ENCODE measurements at regions of chr12 and their contacts with region 1.

Region 1: GRCh38 chr12:57175428-57176138 is 28.2 kb upstream of the LRP1-AS start:
- DNase-seq: peak; percentile 86
- H3K4me3 ChIP-seq: no peak overlapping the region
- H3K27ac ChIP-seq: peak overlapping the region; percentile 0 to 62 (median 36)
- H3K4me1 ChIP-seq: peaks cover 0 to 7% (median 0%) of the 10 kb centered on the region in 4 donors
- H3K27me3 ChIP-seq: no peaks in the 10 kb centered on the region
- CTCF ChIP-seq: peak; percentile 72 to 88 (median 74)
- EP300 ChIP-seq: no peak
- POLR2A ChIP-seq: no peak

Region 2: GRCh38 chr12:57111031-57111734 is 64.4 kb before region 1 on chr12 and contains the start of gene STAT6:
- in situ Hi-C with region 1: no loop called
- intact Hi-C with region 1: no loop called
- DNase-seq: peak; percentile 91
- H3K4me3 ChIP-seq: peak within 1 kb of the TSS; percentile 54 to 82 (median 62)
- H3K27ac ChIP-seq: peak within 1 kb of the TSS; percentile 96 to 99 (median 98)
- H3K4me1 ChIP-seq: peaks cover 15 to 40% (median 28%) of the 10 kb centered on the region in 4 donors
- H3K27me3 ChIP-seq: no peaks in the 10 kb centered on the region
- CTCF ChIP-seq: peak in 2 of 5 experiments; percentile 30 to 42
- EP300 ChIP-seq: no peak
- POLR2A ChIP-seq: peak; percentile 96
- total RNA-seq, gene STAT6: 181 to 318 (median 198) TPM

Region 3: GRCh38 chr12:57124259-57124877 is 51.2 kb before region 1 on chr12:
- in situ Hi-C with region 1: loop called (anchors 5 kb)
- intact Hi-C with region 1: no loop called
- DNase-seq: peak; percentile 84
- H3K4me3 ChIP-seq: no peak overlapping the region
- H3K27ac ChIP-seq: no peak overlapping the region
- H3K4me1 ChIP-seq: peaks cover 7 to 14% (median 11%) of the 10 kb centered on the region in 4 donors
- H3K27me3 ChIP-seq: no peaks in the 10 kb centered on the region
- CTCF ChIP-seq: peak; percentile 96 to 98 (median 97)
- EP300 ChIP-seq: no peak
- POLR2A ChIP-seq: no peak